SK-N-SH (cell line): ENCODE measurements at regions of chr18 and their contacts with region 1.

Region 1: DNA sequence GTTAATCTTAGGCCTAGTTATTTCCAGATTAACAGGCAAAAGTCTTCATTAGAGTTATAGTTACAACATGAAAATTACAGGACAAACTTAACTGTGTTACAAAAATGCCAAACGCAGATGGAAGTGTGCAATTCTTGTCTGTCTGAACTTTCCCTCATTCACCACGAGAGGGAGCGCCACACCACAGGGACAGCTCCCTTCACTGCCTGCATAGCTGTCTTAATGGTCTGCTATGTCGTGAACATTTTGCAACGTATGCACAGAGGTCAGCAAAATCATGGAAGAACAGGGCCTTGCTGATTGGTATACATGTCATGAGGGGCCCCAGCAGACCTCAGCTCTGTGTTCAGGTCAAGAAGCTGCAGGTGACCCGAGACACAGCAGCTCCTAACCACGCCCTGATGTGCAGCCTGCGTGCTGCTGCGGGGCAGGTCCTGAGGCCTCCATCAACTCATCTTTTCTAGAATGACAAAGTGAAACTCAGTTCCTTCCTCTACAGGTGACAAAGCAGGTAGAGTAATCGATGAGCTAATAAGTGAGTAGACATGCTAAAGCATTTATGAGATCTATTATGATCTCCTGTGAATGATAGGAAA is 78.8 kb upstream of the ATP8B1 start:
- DNase-seq: peak; percentile 57
- H3K4me3 ChIP-seq: peak overlapping the region in 1 of 2 experiments; percentile 33; a peak in 1 of 4 replicates
- H3K27ac ChIP-seq: no peak overlapping the region
- H3K4me1 ChIP-seq: no peaks in the 10 kb centered on the region; a peak in 1 of 4 replicates
- H3K27me3 ChIP-seq: no peaks in the 10 kb centered on the region
- CTCF ChIP-seq: peak; percentile 94
- EP300 ChIP-seq: no peak
- RAD21 ChIP-seq: peak; percentile 98

Region 2: GRCh38 chr18:57898506-57899124 is 16.7 kb after region 1 on chr18:
- CTCF ChIA-PET with region 1: interaction called, 13 read pairs
- POLR2A ChIA-PET with region 1: no interaction called
- DNase-seq: no peak
- H3K4me3 ChIP-seq: no peak overlapping the region
- H3K27ac ChIP-seq: no peak overlapping the region
- H3K4me1 ChIP-seq: no peaks in the 10 kb centered on the region
- H3K27me3 ChIP-seq: no peaks in the 10 kb centered on the region
- CTCF ChIP-seq: no peak
- EP300 ChIP-seq: no peak
- RAD21 ChIP-seq: no peak

Region 3: GRCh38 chr18:57915865-57916582 is 34.1 kb after region 1 on chr18:
- CTCF ChIA-PET with region 1: interaction called, 15 read pairs
- POLR2A ChIA-PET with region 1: no interaction called
- DNase-seq: peak; percentile 52
- H3K4me3 ChIP-seq: no peak overlapping the region
- H3K27ac ChIP-seq: peak overlapping the region in 1 of 2 experiments; percentile 51; a peak in 1 of 4 replicates
- H3K4me1 ChIP-seq: peaks cover 11 to 13% of the 10 kb centered on the region in 2 experiments; a peak in 3 of 4 replicates
- H3K27me3 ChIP-seq: no peaks in the 10 kb centered on the region
- CTCF ChIP-seq: no peak
- EP300 ChIP-seq: peak in 1 of 2 experiments; percentile 48; a peak in 1 of 4 replicates
- RAD21 ChIP-seq: no peak

Region 4: GRCh38 chr18:58125183-58125582 is 243.3 kb after region 1 on chr18:
- CTCF ChIA-PET with region 1: interaction called, 52 read pairs
- POLR2A ChIA-PET with region 1: interaction called, 3 read pairs
- DNase-seq: no peak
- H3K4me3 ChIP-seq: no peak overlapping the region
- H3K27ac ChIP-seq: no peak overlapping the region
- H3K4me1 ChIP-seq: no peaks in the 10 kb centered on the region
- H3K27me3 ChIP-seq: no peaks in the 10 kb centered on the region
- CTCF ChIP-seq: no peak
- EP300 ChIP-seq: no peak
- RAD21 ChIP-seq: no peak